Brain microvascular endothelial cell (primary cell): ENCODE measurements at regions of chr17 and their contacts with region 1.

Region 1: GRCh38 chr17:72539981-72540897 is 419.4 kb downstream of the SOX9 start:
- DNase-seq: peak; percentile 43
- H3K4me3 ChIP-seq: peak overlapping the region; percentile 33
- H3K27ac ChIP-seq: peak overlapping the region; percentile 42
- H3K27me3 ChIP-seq: no peaks in the 10 kb centered on the region
- CTCF ChIP-seq: peak; percentile 68

Region 2: GRCh38 chr17:71438631-71439146 is 1101.5 kb before region 1 on chr17:
- in situ Hi-C with region 1: loop called (anchors 25 kb)
- DNase-seq: peak; percentile 94
- H3K4me3 ChIP-seq: no peak overlapping the region
- H3K27ac ChIP-seq: peak overlapping the region; percentile 64
- H3K27me3 ChIP-seq: no peaks in the 10 kb centered on the region
- CTCF ChIP-seq: no peak

Region 3: DNA sequence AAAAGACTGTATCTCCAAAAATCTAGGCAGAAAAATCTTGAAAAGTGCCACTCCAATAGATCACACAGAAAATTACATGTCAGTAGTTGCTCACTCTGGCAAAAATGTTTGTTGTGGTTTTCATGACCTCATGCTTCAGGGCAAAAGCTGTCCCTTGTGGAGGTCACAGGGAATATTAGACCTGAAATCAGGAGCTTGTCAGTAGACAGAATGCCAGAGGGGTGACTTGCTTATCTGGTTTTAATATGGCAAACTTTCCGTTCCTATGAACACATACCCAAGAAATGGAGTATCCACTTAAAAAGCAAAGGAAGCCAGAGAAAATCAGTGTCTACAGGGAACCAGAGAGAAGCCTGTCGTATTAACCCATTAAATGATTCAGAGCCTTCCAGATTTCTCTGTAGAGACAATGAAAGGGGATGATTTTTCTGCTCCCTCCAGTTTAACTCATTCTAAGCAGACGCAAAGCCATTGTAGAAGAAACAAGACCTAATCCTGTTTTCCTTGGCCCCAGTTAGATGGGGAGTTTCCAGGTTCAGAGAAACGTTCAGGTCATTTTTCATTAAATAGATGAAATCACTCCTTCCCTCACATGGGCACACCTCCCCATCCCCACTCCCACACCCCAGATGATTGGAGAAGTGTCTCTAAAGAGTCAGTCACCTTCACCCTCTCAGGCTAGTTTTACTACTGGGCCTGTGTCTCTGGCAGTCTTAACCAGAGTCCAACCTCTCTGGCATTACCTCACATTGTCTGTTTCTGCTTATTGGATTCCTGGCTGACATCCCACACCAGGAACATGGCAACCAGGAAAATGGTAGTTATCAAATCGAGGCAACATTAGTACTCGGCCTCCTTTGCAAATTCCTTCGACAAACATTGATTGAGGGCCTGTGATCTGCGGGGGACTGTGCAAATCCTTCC is 413.4 kb before region 1 on chr17:
- in situ Hi-C with region 1: loop called (anchors 25 kb)
- DNase-seq: peak; percentile 79
- H3K4me3 ChIP-seq: no peak overlapping the region
- H3K27ac ChIP-seq: peak overlapping the region; percentile 57
- H3K27me3 ChIP-seq: no peaks in the 10 kb centered on the region
- CTCF ChIP-seq: peak; percentile 5

Region 4: GRCh38 chr17:72631949-72632684 is 91.9 kb after region 1 on chr17:
- in situ Hi-C with region 1: no loop called
- DNase-seq: no peak
- H3K4me3 ChIP-seq: no peak overlapping the region
- H3K27ac ChIP-seq: no peak overlapping the region
- H3K27me3 ChIP-seq: no peaks in the 10 kb centered on the region
- CTCF ChIP-seq: no peak